CD4-positive, alpha-beta memory T cell (primary cell): ENCODE measurements at regions of chr15 and their contacts with region 1.

Region 1: GRCh38 chr15:93030430-93031105 is 58.4 kb downstream of the RGMA start:
- DNase-seq: peak in 4 of 5 donors; percentile 57 to 71 (median 63)
- H3K4me3 ChIP-seq: no peak overlapping the region
- H3K4me3 Mint-ChIP-seq: peak overlapping the region in 1 of 8 donors; percentile 27
- H3K27ac ChIP-seq: no peak overlapping the region
- H3K27ac Mint-ChIP-seq: peak overlapping the region; percentile 17 to 85 (median 66)
- H3K4me1 ChIP-seq: peaks cover 22% of the 10 kb centered on the region
- H3K4me1 Mint-ChIP-seq: peaks cover 14 to 29% (median 19%) of the 10 kb centered on the region in 4 donors
- H3K27me3 ChIP-seq: no peaks in the 10 kb centered on the region
- H3K27me3 Mint-ChIP-seq: no peaks in the 10 kb centered on the region

Region 2: GRCh38 chr15:94119923-94120775 is 1089.6 kb after region 1 on chr15:
- CTCF ChIA-PET with region 1: interaction called, 27 read pairs
- POLR2A ChIA-PET with region 1: interaction called, 4 read pairs
- intact Hi-C with region 1: loop called (anchors 1 kb)
- DNase-seq: peak; percentile 55 to 61 (median 58)
- H3K4me3 ChIP-seq: no peak overlapping the region
- H3K4me3 Mint-ChIP-seq: no peak overlapping the region
- H3K27ac ChIP-seq: no peak overlapping the region
- H3K27ac Mint-ChIP-seq: no peak overlapping the region
- H3K4me1 ChIP-seq: no peaks in the 10 kb centered on the region
- H3K4me1 Mint-ChIP-seq: no peaks in the 10 kb centered on the region
- H3K27me3 ChIP-seq: no peaks in the 10 kb centered on the region
- H3K27me3 Mint-ChIP-seq: peaks cover 0 to 1% of the 10 kb centered on the region in 2 donors